Left colon (tissue), 2 donors: ENCODE measurements at regions of chr2 and their contacts with region 1.

Region 1: GRCh38 chr2:68467077-68467960 is at the starts of genes APLF and FBXO48:
- DNase-seq: peak; percentile 98 to 99
- ATAC-seq: peak; percentile 94
- total RNA-seq, gene APLF: 1.3 to 3.4 TPM
- total RNA-seq, gene FBXO48: 1.5 to 2.1 TPM

Region 2: GRCh38 chr2:68715353-68716041 is 248.2 kb after region 1 on chr2:
- intact Hi-C with region 1: loop called in 1 of 2 experiments (anchors 10 kb)
- DNase-seq: peak; percentile 53 to 73
- ATAC-seq: peak; percentile 85

Region 3: GRCh38 chr2:69306822-69307578 is 839.7 kb after region 1 on chr2:
- intact Hi-C with region 1: no loop called
- DNase-seq: peak; percentile 77 to 85
- ATAC-seq: peak; percentile 66

Region 4: DNA sequence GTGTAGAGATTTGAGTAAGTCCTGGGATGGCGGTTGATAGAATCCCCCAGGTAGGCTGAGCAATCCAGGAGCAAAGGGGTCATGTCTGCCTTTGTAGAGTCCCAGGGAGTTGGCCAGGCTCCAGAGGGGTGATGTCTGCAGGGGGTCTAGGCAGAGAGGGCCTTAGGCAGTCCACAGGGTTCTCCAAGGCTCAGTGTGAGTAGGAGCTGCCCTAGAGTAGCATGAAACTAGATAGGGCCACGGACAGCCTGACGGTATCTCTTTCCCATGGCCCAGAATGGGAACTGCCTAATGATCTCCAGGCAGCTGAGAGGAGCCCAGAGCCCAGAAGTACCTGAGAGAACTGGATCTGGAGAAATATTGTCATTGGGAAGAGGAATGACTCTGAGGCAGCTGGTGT is 1843.6 kb after region 1 on chr2:
- intact Hi-C with region 1: no loop called
- DNase-seq: no peak
- ATAC-seq: no peak